Mammary epithelial cell (primary cell): ENCODE measurements at regions of chr3 and their contacts with region 1.

Region 1: DNA sequence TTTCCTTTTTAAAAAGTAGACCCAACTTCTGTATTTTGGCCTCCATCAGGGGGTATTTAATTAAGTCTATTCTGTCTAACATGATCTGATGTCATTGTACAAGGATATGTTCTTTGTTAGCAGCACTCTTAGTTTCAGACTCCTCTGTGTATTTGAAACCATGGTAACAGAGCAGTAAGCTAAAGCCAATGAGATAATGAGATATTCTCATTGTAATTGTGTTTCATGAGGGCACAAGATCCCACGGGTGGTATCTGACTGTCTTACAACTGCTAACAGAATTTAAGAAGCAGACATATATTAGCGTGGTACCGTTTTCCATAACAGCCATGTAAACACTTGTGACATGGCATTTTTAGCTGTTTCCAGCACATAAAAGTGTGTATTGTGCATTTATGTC is 251.2 kb upstream of the VEPH1 start:
- DNase-seq: no peak
- H3K4me3 ChIP-seq: no peak overlapping the region
- H3K27ac ChIP-seq: no peak overlapping the region
- H3K4me1 ChIP-seq: no peaks in the 10 kb centered on the region
- H3K27me3 ChIP-seq: peaks cover 6% of the 10 kb centered on the region
- CTCF ChIP-seq: no peak

Region 2: GRCh38 chr3:156356537-156357363 is 1397.7 kb before region 1 on chr3:
- CTCF ChIA-PET with region 1: no interaction called
- dilution Hi-C with region 1: no loop called
- in situ Hi-C with region 1: no loop called
- intact Hi-C with region 1: no loop called
- DNase-seq: no peak
- H3K4me3 ChIP-seq: no peak overlapping the region
- H3K27ac ChIP-seq: no peak overlapping the region
- H3K4me1 ChIP-seq: no peaks in the 10 kb centered on the region
- H3K27me3 ChIP-seq: no peaks in the 10 kb centered on the region
- CTCF ChIP-seq: no peak

Region 3: DNA sequence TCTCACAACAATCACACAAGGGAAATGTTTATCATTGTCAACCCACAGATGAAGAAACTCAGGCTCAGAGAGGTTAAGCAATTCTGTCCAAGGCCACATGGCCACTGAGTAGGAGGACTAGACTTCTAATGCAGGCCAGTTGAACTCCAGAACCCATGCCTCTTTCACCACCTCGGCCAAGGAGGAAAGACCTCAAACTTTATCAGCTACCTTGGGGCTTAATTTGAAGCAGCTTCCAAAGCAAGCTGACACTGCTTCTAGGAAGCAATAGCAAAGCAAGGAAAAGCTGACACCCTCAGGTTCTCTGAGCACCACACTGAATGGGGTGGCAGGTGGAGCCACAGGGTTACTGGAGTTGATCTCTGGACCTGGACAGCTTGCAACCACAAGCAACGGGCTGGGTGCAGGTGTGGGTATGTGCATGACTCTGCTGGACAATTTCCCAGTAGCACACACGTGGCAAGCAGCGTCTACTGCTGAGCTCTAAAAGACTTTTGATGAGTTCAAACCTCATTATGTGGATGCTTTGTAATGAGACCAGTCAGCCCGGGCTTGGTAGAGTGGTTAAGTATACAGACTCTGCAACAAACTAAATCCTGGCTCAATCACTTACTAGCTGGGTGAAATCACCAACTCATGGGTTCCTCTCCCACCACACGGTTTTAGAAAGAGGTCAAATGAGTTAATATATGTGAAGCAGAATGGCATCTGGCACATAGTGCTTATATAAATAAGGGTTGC is 617.6 kb before region 1 on chr3:
- CTCF ChIA-PET with region 1: no interaction called
- dilution Hi-C with region 1: no loop called
- in situ Hi-C with region 1: no loop called
- intact Hi-C with region 1: no loop called
- DNase-seq: peak; percentile 81
- H3K4me3 ChIP-seq: no peak overlapping the region
- H3K27ac ChIP-seq: peak overlapping the region; percentile 56
- H3K4me1 ChIP-seq: peaks cover 52% of the 10 kb centered on the region
- H3K27me3 ChIP-seq: no peaks in the 10 kb centered on the region
- CTCF ChIP-seq: no peak

Region 4: GRCh38 chr3:157705258-157705657 is 49.2 kb before region 1 on chr3:
- CTCF ChIA-PET with region 1: no interaction called
- dilution Hi-C with region 1: loop called (anchors 5 kb)
- in situ Hi-C with region 1: no loop called
- intact Hi-C with region 1: no loop called
- DNase-seq: no peak
- H3K4me3 ChIP-seq: no peak overlapping the region
- H3K27ac ChIP-seq: no peak overlapping the region
- H3K4me1 ChIP-seq: no peaks in the 10 kb centered on the region
- H3K27me3 ChIP-seq: no peaks in the 10 kb centered on the region
- CTCF ChIP-seq: no peak

Region 5: DNA sequence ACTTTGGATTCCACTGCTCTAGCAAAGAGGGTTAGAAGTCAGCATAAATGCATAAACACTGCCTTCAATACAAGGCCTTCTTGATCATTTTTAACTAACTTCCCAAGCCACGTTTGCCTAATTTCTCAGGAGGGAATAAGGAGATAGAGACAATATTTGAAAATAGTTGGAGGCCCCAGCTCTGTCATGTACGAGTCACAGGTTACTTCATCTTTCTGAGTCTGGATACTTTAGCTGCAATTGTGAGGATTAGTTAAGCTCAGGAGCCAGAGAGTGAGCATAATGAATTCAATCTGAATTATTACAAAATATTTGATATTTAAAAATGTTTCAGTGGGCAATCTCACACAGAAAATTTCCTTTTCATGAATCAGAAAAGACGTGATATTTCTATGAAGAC is 52.8 kb after region 1 on chr3:
- CTCF ChIA-PET with region 1: no interaction called
- dilution Hi-C with region 1: loop called (anchors 5 kb)
- in situ Hi-C with region 1: no loop called
- intact Hi-C with region 1: no loop called
- DNase-seq: peak; percentile 15
- H3K4me3 ChIP-seq: no peak overlapping the region
- H3K27ac ChIP-seq: no peak overlapping the region
- H3K4me1 ChIP-seq: peaks cover 3% of the 10 kb centered on the region
- H3K27me3 ChIP-seq: peaks cover 2% of the 10 kb centered on the region
- CTCF ChIP-seq: no peak